MCF 10A (cell line): ENCODE measurements at regions of chr10 and their contacts with region 1.

Region 1: GRCh38 chr10:74151056-74151878 is at the start of gene ADK:
- DNase-seq: peak; percentile 98
- H3K4me3 Mint-ChIP-seq: no peak within 1 kb of the TSS
- H3K27ac Mint-ChIP-seq: no peak within 1 kb of the TSS
- H3K4me1 Mint-ChIP-seq: peaks cover 28% of the 10 kb centered on the region
- H3K27me3 Mint-ChIP-seq: no peaks in the 10 kb centered on the region
- CTCF ChIP-seq: peak; percentile 25
- total RNA-seq, gene ADK: 96.6 and 98.6 TPM in 2 replicates

Region 2: GRCh38 chr10:74118804-74119203 is 32.5 kb before region 1 on chr10:
- CTCF ChIA-PET with region 1: no interaction called
- POLR2A ChIA-PET with region 1: interaction called, 10 read pairs
- intact Hi-C with region 1: no loop called
- DNase-seq: peak; percentile 56
- H3K4me3 Mint-ChIP-seq: no peak overlapping the region
- H3K27ac Mint-ChIP-seq: peak overlapping the region; percentile 65
- H3K4me1 Mint-ChIP-seq: peaks cover 13% of the 10 kb centered on the region
- H3K27me3 Mint-ChIP-seq: no peaks in the 10 kb centered on the region
- CTCF ChIP-seq: no peak

Region 3: DNA sequence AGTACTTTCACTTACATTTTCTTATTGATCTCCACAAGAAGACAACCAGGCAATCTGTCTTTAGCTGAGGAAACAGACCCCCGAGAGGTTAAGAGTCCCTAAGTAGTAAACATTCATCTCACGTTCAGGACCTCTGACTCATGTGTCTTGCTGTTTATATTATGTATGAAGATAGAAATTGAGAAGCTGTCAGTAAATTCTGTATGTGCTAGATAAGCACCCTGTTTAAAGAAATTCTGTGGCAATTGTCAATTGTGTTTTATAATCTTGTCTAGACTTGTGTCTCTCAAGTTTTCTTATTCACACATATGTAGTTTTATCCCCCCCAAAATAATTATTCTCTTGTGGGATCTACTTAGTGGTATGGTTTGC is 14.2 kb after region 1 on chr10:
- CTCF ChIA-PET with region 1: interaction called, 5 read pairs
- POLR2A ChIA-PET with region 1: interaction called, 12 read pairs
- intact Hi-C with region 1: no loop called
- DNase-seq: no peak
- H3K4me3 Mint-ChIP-seq: no peak overlapping the region
- H3K27ac Mint-ChIP-seq: no peak overlapping the region
- H3K4me1 Mint-ChIP-seq: no peaks in the 10 kb centered on the region
- H3K27me3 Mint-ChIP-seq: no peaks in the 10 kb centered on the region
- CTCF ChIP-seq: no peak

Region 4: GRCh38 chr10:74189999-74190421 is 38.7 kb after region 1 on chr10:
- CTCF ChIA-PET with region 1: interaction called, 4 read pairs
- POLR2A ChIA-PET with region 1: interaction called, 70 read pairs
- intact Hi-C with region 1: loop called (anchors 1 kb)
- DNase-seq: peak; percentile 94
- H3K4me3 Mint-ChIP-seq: peak overlapping the region; percentile 66
- H3K27ac Mint-ChIP-seq: peak overlapping the region; percentile 91
- H3K4me1 Mint-ChIP-seq: peaks cover 43% of the 10 kb centered on the region
- H3K27me3 Mint-ChIP-seq: no peaks in the 10 kb centered on the region
- CTCF ChIP-seq: no peak

Region 5: DNA sequence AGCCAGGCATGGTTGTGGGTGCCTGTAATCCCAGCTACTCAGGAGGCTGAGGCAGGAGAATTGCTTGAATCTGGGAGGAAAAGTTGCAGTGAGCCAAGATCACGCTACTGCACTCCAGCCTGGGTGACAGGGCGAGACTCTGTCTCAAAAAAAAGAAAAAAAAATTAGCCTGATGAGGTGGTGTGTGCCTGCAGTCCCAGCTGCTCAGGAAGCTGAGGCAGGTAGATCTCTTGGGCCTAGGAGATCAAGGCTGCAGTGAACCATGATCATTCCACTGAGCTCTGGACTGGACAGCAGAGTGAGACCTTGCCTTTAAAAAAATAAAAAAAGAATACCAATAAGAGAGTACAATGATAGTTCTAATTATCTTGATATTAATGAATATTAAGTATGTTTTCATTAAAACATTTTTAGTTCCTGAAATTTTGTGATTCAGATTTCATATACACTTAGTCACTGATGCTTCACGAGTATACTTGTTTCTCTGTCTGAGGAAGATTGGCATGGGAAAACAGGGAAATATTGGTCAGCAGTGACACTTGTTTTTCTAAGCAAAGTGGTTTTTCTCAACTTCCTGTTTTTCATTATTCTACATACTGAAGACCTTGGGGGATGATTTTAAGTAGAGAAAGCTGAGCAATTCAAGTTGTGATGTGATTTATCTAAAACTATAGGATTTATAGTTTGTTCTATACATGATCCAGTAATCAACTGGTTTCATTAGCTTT is 76.6 kb after region 1 on chr10:
- CTCF ChIA-PET with region 1: interaction called, 4 read pairs
- POLR2A ChIA-PET with region 1: interaction called, 17 read pairs
- intact Hi-C with region 1: no loop called
- DNase-seq: peak; percentile 65
- H3K4me3 Mint-ChIP-seq: no peak overlapping the region
- H3K27ac Mint-ChIP-seq: peak overlapping the region; percentile 89
- H3K4me1 Mint-ChIP-seq: peaks cover 27% of the 10 kb centered on the region
- H3K27me3 Mint-ChIP-seq: no peaks in the 10 kb centered on the region
- CTCF ChIP-seq: no peak

Region 6: DNA sequence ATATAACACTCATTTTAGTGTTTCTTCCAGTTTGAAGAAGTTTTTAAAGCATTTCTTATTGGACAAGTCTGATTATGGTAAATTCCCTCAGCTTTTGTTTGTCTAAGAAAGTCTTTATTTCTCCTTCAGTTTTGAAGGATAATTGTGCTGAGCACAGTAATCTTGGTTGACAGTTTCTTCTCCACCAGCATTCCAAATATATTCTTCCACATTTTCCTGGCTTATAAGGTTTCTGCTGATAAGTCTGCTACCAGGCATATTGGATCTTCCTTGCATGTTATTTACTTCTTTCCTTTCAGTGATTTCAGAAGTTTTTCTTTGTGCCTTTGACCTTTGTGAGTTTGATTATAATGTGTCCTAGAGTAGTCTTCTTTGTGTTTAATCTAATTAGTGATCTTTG is 210.4 kb after region 1 on chr10:
- CTCF ChIA-PET with region 1: no interaction called
- POLR2A ChIA-PET with region 1: no interaction called
- intact Hi-C with region 1: no loop called
- DNase-seq: no peak
- H3K4me3 Mint-ChIP-seq: no peak overlapping the region
- H3K27ac Mint-ChIP-seq: no peak overlapping the region
- H3K4me1 Mint-ChIP-seq: peaks cover 12% of the 10 kb centered on the region
- H3K27me3 Mint-ChIP-seq: no peaks in the 10 kb centered on the region
- CTCF ChIP-seq: no peak